Ascending aorta (tissue), 2 donors: ENCODE measurements at regions of chr5 and their contacts with region 1.

Region 1: GRCh38 chr5:127313847-127314473 is 23.4 kb downstream of the MEGF10 start:
- DNase-seq: peak in 1 of 2 donors; percentile 73
- H3K4me3 ChIP-seq: no peak overlapping the region
- H3K27ac ChIP-seq: no peak overlapping the region
- H3K4me1 ChIP-seq: no peaks in the 10 kb centered on the region
- H3K27me3 ChIP-seq: no peaks in the 10 kb centered on the region
- CTCF ChIP-seq: peak; percentile 42 to 62 (median 53)

Region 2: DNA sequence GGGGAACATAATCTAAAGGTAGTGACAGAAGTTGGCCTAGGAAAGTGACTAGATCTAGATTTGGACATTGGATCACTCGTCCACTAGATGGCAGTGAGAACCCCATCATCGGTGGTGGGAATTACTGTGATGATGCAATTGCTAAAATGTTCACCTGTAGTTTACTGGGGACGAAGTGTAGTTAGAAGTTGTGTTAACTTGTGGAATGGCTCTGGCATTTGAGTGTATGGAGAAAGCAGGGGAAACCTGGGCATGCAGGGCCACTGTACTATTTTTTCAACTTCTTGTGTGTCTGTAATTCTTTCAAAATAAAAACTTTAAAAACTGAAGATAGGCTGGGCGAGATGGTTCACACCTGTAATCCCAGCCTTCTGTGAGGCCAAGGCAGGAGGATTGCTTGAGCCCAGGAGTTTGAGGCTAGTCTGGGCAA is 637.8 kb before region 1 on chr5:
- intact Hi-C with region 1: loop called (anchors 5 kb)
- DNase-seq: peak in 1 of 2 donors; percentile 67
- H3K4me3 ChIP-seq: no peak overlapping the region
- H3K27ac ChIP-seq: no peak overlapping the region
- H3K4me1 ChIP-seq: no peaks in the 10 kb centered on the region
- H3K27me3 ChIP-seq: no peaks in the 10 kb centered on the region
- CTCF ChIP-seq: peak; percentile 61 to 78 (median 63)

Region 3: DNA sequence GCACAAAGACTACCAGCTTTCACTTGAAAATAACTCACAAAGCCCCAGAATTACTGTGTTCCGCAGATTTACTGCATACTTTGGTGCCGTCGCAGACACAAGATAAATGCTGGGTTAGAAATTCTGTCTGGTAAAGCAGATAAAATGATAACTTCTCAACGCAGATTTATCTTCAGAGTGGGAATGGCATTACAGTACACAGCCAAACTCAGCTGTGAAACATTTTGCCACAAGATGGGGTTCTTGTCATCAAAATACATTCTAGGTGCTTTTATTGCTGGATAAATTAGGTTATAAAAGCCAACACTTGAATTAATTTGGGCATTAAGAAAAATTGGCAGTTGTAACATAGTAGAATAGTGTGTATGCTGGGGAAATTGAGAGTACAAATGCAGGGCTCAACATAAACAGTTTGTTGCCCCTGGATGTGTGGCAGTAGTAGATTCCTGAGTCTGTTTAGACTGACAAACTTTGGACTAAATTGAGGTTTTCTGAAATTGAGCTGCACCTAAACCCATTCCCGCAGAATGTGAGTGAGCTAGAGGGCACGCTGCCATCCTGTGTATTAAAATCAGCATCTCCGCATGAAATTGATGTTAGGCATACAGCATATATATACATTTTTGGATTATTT is 475.9 kb before region 1 on chr5:
- intact Hi-C with region 1: loop called (anchors 2 kb)
- DNase-seq: no peak
- H3K4me3 ChIP-seq: no peak overlapping the region
- H3K27ac ChIP-seq: no peak overlapping the region
- H3K4me1 ChIP-seq: no peaks in the 10 kb centered on the region
- H3K27me3 ChIP-seq: no peaks in the 10 kb centered on the region
- CTCF ChIP-seq: peak; percentile 18 to 54 (median 28)